IMR-90 (cell line): ENCODE measurements at regions of chr3 and their contacts with region 1.

Region 1: GRCh38 chr3:48432411-48433372 is 2.8 kb upstream of the PLXNB1 start:
- DNase-seq: peak; percentile 14
- ATAC-seq: no peak
- H3K4me3 ChIP-seq: no peak overlapping the region
- H3K27ac ChIP-seq: 0 out of 2 replicates have a peak overlapping the region, but pooled peaks have one; percentile 21
- H3K4me1 ChIP-seq: peaks cover 8% of the 10 kb centered on the region; the same call in 1 of the 2 replicates
- H3K27me3 ChIP-seq: no peaks in the 10 kb centered on the region
- CTCF ChIP-seq: 0 out of 2 replicates have a peak, but pooled peaks have one; percentile 16
- POLR2A ChIP-seq: no peak
- RAD21 ChIP-seq: no peak

Region 2: GRCh38 chr3:48400824-48401433 is 31.8 kb before region 1 on chr3:
- CTCF ChIA-PET with region 1: interaction called, 65 read pairs
- POLR2A ChIA-PET with region 1: interaction called, 4 read pairs
- dilution Hi-C with region 1: no loop called
- in situ Hi-C with region 1: loop called (anchors 5 kb)
- intact Hi-C with region 1: loop called (anchors 1 kb)
- DNase-seq: peak; percentile 51
- ATAC-seq: peak; percentile 26; the same call in 1 of the 2 replicates
- H3K4me3 ChIP-seq: no peak overlapping the region
- H3K27ac ChIP-seq: no peak overlapping the region
- H3K4me1 ChIP-seq: peaks cover 7% of the 10 kb centered on the region
- H3K27me3 ChIP-seq: no peaks in the 10 kb centered on the region; the same call in 1 of the 2 replicates
- CTCF ChIP-seq: peak; percentile 65
- POLR2A ChIP-seq: no peak
- RAD21 ChIP-seq: peak; percentile 80

Region 3: GRCh38 chr3:48859206-48859605 is 426.5 kb after region 1 on chr3:
- CTCF ChIA-PET with region 1: no interaction called
- POLR2A ChIA-PET with region 1: no interaction called
- dilution Hi-C with region 1: no loop called
- in situ Hi-C with region 1: no loop called
- intact Hi-C with region 1: no loop called
- DNase-seq: no peak
- ATAC-seq: no peak
- H3K4me3 ChIP-seq: no peak overlapping the region
- H3K27ac ChIP-seq: no peak overlapping the region
- H3K4me1 ChIP-seq: 0 out of 2 replicates have a peak, but pooled peaks cover 3% of the 10 kb centered on the region
- H3K27me3 ChIP-seq: no peaks in the 10 kb centered on the region
- CTCF ChIP-seq: no peak
- POLR2A ChIP-seq: no peak
- RAD21 ChIP-seq: no peak